ENCODE measurements at regions of chr19 and their contacts with region 1.

Region 1: DNA sequence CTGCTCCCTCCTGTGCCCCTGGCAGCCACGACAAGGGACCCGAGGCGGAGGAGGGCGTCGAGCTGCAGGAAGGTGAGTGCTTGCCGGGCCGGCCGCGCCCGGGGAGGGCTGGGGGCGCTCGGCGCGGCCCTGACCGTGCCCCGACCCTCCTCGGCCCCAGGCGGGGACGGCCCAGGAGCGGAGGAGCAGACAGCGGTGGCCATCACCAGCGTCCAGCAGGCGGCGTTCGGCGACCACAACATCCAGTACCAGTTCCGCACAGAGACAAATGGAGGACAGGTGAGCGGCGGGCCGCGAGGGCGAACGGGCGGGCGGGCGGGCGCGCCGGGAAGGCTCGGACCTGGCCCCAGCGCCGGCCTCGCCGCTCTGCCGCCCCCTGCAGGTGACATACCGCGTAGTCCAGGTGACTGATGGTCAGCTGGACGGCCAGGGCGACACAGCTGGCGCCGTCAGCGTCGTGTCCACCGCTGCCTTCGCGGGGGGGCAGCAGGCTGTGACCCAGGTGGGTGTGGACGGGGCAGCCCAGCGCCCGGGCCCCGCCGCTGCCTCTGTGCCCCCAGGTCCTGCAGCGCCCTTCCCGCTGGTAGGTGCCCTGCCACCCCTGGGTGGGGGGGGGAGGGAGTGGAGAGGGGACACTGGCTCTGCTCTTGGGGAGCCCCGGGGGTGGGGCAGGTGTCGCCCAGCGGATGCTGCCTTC is 807 bp downstream of the USF2 start:
- DNase-seq: peak; percentile 74 to 89 (median 85)
- H3K4me3 ChIP-seq: peak overlapping the region in 2 of 3 experiments; percentile 45 to 74
- H3K4me3 Mint-ChIP-seq: peak overlapping the region; percentile 71 to 76
- H3K27ac ChIP-seq: peak overlapping the region in 1 of 2 donors; percentile 74
- H3K27ac Mint-ChIP-seq: peak overlapping the region in 4 of 7 donors; percentile 48 to 78 (median 69)
- H3K4me1 ChIP-seq: peaks cover 65 to 77% of the 10 kb centered on the region in 2 donors
- H3K4me1 Mint-ChIP-seq: peaks cover 64% of the 10 kb centered on the region
- H3K27me3 ChIP-seq: no peaks in the 10 kb centered on the region
- H3K27me3 Mint-ChIP-seq: peaks cover 0 to 5% (median 3%) of the 10 kb centered on the region in 3 donors
- CTCF ChIP-seq: peak; percentile 96

Region 2: DNA sequence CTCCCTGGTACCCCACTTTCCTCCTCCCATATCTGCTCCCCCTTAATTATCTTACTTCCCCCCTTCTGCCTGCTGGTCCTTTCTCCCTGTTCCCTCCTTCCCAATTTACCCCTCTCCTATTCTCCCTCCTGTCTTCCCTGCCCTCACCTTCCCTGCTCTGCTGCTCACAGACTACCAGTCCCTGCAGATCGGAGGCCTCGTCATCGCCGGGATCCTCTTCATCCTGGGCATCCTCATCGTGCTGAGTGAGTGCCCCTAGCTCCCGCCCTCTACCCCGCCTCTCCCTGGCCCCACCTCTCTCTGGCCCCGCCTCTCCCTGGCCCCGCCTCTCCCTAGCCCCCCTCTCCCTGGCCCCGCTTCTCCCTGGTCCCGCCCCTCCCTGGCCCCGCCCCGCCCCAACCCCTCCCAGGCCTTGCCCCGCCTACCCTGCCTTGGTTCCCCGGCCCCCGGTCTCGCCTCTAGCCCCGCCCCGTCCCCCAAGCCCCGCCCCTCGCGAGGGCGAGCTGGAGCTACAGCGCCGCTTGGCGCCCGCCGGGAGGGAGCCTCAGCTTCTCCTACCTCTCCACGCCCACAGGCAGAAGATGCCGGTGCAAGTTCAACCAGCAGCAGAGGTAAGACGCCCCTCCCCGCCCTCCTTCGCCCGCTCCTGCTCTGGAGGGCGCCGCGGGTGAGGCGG is 128.5 kb before region 1 on chr19:
- intact Hi-C with region 1: loop called in 1 of 2 experiments (anchors 5 kb)
- DNase-seq: peak; percentile 82 to 87 (median 83)
- H3K4me3 ChIP-seq: peak overlapping the region in 1 of 3 experiments; percentile 64
- H3K4me3 Mint-ChIP-seq: peak overlapping the region; percentile 71 to 76
- H3K27ac ChIP-seq: no peak overlapping the region
- H3K27ac Mint-ChIP-seq: peak overlapping the region in 6 of 7 donors; percentile 62 to 91 (median 78)
- H3K4me1 ChIP-seq: peaks cover 42 to 44% of the 10 kb centered on the region in 2 donors
- H3K4me1 Mint-ChIP-seq: peaks cover 45% of the 10 kb centered on the region
- H3K27me3 ChIP-seq: peaks cover 23 to 37% of the 10 kb centered on the region in 2 donors
- H3K27me3 Mint-ChIP-seq: peaks cover 31 to 46% (median 32%) of the 10 kb centered on the region in 3 donors
- CTCF ChIP-seq: no peak

Region 3: DNA sequence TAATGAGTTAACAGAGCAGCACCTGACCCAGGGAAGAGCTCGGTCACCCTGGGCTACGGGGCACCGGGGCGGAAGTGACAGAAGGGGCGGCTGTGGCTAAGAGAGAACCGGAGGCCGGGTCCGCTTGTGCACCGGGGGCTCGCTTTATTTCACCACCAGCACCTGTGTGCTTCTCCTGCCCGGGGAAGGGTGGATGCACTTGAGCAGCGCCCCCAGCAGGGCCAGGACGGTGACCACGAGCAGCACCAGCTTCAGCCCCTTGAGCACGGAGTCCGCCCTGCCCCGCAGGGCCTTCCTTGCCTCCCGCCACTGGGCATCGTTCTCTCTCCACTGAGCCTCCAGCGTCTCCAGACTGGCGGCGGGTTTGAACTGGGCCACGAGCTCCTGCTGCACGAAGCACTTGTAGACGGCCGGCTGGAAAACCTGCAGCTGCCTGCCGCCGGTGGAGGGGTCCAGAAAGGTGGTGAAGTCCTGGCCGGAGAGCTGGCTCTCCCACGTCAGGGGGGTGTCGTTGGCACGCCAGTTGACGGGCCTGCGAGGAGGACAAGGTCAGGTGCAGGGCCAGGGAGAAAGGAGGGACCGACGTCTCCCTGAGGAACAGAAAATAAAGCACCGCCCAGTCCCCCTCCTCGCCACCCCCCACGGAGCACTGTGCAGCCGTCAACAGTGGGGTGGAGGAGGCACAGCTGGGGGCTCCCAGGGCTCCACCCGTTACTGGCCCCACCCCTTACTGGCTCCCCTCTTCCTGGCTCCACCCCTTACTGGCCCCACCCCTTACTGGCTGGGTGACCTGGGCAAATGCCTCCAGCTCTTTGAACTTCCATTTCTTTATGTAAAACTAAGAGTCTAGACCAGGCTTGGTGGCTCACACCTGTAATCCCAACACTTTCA is 44.6 kb before region 1 on chr19:
- intact Hi-C with region 1: loop called in 1 of 2 experiments (anchors 5 kb)
- DNase-seq: no peak
- H3K4me3 ChIP-seq: no peak overlapping the region
- H3K4me3 Mint-ChIP-seq: no peak overlapping the region
- H3K27ac ChIP-seq: no peak overlapping the region
- H3K27ac Mint-ChIP-seq: peak overlapping the region in 1 of 7 donors; percentile 19
- H3K4me1 ChIP-seq: peaks cover 13 to 19% of the 10 kb centered on the region in 2 donors
- H3K4me1 Mint-ChIP-seq: peaks cover 22% of the 10 kb centered on the region
- H3K27me3 ChIP-seq: no peaks in the 10 kb centered on the region
- H3K27me3 Mint-ChIP-seq: peaks cover 3 to 10% (median 6%) of the 10 kb centered on the region in 3 donors
- CTCF ChIP-seq: no peak

Region 4: GRCh38 chr19:35253316-35254286 is 16.0 kb before region 1 on chr19:
- intact Hi-C with region 1: no loop called
- DNase-seq: no peak
- H3K4me3 ChIP-seq: no peak overlapping the region
- H3K4me3 Mint-ChIP-seq: no peak overlapping the region
- H3K27ac ChIP-seq: no peak overlapping the region
- H3K27ac Mint-ChIP-seq: no peak overlapping the region
- H3K4me1 ChIP-seq: peaks cover 8 to 9% of the 10 kb centered on the region in 2 donors
- H3K4me1 Mint-ChIP-seq: peaks cover 10% of the 10 kb centered on the region
- H3K27me3 ChIP-seq: peaks cover 7 to 22% of the 10 kb centered on the region in 2 donors
- H3K27me3 Mint-ChIP-seq: peaks cover 26 to 35% (median 32%) of the 10 kb centered on the region in 3 donors
- CTCF ChIP-seq: no peak

Region 5: DNA sequence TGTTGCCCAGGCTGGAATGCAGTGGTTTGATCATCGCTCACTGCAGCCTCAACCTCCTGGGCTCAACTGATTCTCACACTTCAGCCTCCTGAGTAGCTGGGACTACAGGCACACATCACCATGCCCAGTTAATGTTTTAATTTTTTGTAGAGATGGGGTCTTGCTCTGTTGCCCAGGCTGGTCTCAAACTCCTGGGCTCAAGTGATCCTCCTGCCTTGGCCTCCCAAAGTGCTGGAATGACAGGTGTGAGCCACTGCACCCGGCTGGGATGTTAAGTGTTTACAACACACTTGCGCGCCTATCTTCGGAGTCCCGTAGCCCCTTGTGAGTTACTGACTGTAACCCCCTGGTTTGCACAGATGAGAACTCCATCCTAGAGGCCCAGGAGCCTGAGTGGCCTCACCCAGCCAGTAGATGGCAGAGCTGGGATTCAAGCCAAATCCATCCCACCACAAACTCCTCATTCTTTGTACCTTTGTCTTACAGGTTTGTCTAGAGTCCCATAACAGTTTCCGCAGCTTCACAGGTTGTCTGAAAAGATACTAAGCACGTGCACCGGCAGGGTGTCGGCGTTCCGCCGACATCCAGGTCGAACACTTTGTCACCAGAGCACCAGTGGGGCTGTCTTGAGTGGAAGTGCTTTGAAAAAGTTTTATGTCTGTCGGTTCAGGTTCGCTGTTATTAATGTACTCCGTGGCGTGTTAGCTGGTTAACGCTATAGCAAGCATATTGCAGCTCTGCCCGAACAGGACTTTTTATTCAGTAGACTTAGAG is 37.1 kb after region 1 on chr19:
- intact Hi-C with region 1: loop called in 1 of 2 experiments (anchors 5 kb)
- DNase-seq: no peak
- H3K4me3 ChIP-seq: no peak overlapping the region
- H3K4me3 Mint-ChIP-seq: peak overlapping the region in 1 of 2 donors; percentile 26
- H3K27ac ChIP-seq: peak overlapping the region in 1 of 2 donors; percentile 48
- H3K27ac Mint-ChIP-seq: peak overlapping the region in 6 of 7 donors; percentile 73 to 88 (median 79)
- H3K4me1 ChIP-seq: peaks cover 18 to 21% of the 10 kb centered on the region in 2 donors
- H3K4me1 Mint-ChIP-seq: peaks cover 33% of the 10 kb centered on the region
- H3K27me3 ChIP-seq: no peaks in the 10 kb centered on the region
- H3K27me3 Mint-ChIP-seq: peaks cover 1 to 4% (median 3%) of the 10 kb centered on the region in 3 donors
- CTCF ChIP-seq: peak; percentile 41

Region 6: DNA sequence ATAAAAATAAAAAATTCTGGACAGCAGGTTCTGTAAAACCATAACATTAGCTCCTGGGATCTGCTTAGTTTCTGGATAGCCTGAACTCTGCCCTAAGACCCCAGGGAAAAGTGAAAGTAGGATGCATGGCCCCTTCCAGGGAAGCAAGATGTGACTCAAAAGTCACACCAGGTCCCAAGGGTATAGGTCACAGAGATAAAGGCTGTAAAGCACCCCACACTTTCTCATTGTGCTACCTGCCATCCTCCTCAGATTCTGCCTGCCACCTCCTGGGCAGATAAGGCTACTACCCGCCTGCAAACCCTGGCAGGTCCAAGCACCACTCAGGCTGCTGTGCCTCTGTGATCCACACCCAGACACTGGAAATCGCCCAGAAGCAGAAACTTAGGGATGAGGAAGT is 199.1 kb after region 1 on chr19:
- intact Hi-C with region 1: loop called in 1 of 2 experiments (anchors 5 kb)
- DNase-seq: peak; percentile 67 to 84 (median 72)
- H3K4me3 ChIP-seq: no peak overlapping the region
- H3K4me3 Mint-ChIP-seq: no peak overlapping the region
- H3K27ac ChIP-seq: no peak overlapping the region
- H3K27ac Mint-ChIP-seq: peak overlapping the region in 3 of 7 donors; percentile 19 to 41 (median 36)
- H3K4me1 ChIP-seq: peaks cover 5 to 11% of the 10 kb centered on the region in 2 donors
- H3K4me1 Mint-ChIP-seq: peaks cover 18% of the 10 kb centered on the region
- H3K27me3 ChIP-seq: no peaks in the 10 kb centered on the region
- H3K27me3 Mint-ChIP-seq: peaks cover 0 to 4% (median 0%) of the 10 kb centered on the region in 3 donors
- CTCF ChIP-seq: peak; percentile 85

Region 7: DNA sequence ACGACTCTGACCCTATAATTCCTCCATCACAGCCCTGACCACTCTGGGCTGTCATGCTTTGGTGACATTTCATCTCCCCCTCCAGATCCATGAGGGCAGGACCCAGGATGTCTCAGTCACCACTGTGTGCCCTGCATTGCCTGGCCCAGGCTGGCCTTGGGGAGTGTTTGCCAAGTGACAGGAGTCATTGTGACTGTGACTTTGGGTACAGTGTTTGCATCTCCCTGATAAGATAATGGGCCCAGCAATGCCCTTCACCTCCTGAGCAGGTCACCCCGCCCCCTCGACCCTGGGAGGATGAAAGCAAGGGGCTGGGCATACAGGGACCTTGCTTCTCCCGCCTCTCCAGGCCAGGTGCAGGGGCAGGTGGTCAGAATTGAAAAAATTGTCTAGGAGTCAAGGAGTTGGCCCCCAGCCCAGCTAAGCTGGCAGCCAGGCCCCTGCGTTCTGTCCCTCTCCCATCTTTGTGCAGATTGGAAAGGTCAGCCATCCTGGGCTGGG is 299.8 kb after region 1 on chr19:
- intact Hi-C with region 1: no loop called
- DNase-seq: no peak
- H3K4me3 ChIP-seq: no peak overlapping the region
- H3K4me3 Mint-ChIP-seq: no peak overlapping the region
- H3K27ac ChIP-seq: no peak overlapping the region
- H3K27ac Mint-ChIP-seq: no peak overlapping the region
- H3K4me1 ChIP-seq: no peaks in the 10 kb centered on the region
- H3K4me1 Mint-ChIP-seq: no peaks in the 10 kb centered on the region
- H3K27me3 ChIP-seq: no peaks in the 10 kb centered on the region
- H3K27me3 Mint-ChIP-seq: peaks cover 2 to 19% (median 16%) of the 10 kb centered on the region in 3 donors
- CTCF ChIP-seq: no peak